ENCODE measurements at regions of chr12 and their contacts with region 1.

Region 1: GRCh38 chr12:62793256-62794217 is 141.4 kb downstream of the PPM1H start:
- DNase-seq: peak; percentile 80
- ATAC-seq: peak; percentile 70
- H3K4me3 ChIP-seq: no peak overlapping the region
- H3K4me3 Mint-ChIP-seq: no peak overlapping the region
- H3K27ac ChIP-seq: no peak overlapping the region
- H3K27ac Mint-ChIP-seq: no peak overlapping the region
- H3K4me1 ChIP-seq: no peaks in the 10 kb centered on the region
- H3K4me1 Mint-ChIP-seq: no peaks in the 10 kb centered on the region
- H3K27me3 ChIP-seq: no peaks in the 10 kb centered on the region
- H3K27me3 Mint-ChIP-seq: no peaks in the 10 kb centered on the region
- CTCF ChIP-seq: peak; percentile 97

Region 2: DNA sequence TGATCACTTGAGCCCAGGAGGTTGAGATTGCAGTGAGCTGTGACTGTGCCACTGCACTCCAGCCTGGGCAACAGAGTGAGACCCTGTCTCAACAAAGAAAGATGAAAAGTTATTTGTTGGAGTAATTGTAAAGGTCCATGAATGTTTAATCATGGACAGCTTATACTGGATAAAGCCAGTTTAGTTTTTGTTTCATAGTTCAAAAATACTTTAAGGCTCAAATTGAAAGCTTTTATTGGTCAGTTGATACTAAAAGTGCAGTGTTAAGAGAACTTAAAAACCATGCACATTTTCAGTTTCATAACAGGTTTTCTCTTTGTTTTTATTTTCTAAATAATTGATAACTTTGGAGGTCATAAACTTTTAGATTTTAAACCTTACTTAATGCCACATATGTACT is 218.5 kb before region 1 on chr12:
- CTCF ChIA-PET with region 1: interaction called, 349 read pairs
- POLR2A ChIA-PET with region 1: no interaction called
- intact Hi-C with region 1: no loop called
- DNase-seq: no peak
- ATAC-seq: no peak
- H3K4me3 ChIP-seq: no peak overlapping the region
- H3K4me3 Mint-ChIP-seq: no peak overlapping the region
- H3K27ac ChIP-seq: no peak overlapping the region
- H3K27ac Mint-ChIP-seq: no peak overlapping the region
- H3K4me1 ChIP-seq: no peaks in the 10 kb centered on the region
- H3K4me1 Mint-ChIP-seq: no peaks in the 10 kb centered on the region
- H3K27me3 ChIP-seq: no peaks in the 10 kb centered on the region
- H3K27me3 Mint-ChIP-seq: no peaks in the 10 kb centered on the region
- CTCF ChIP-seq: no peak

Region 3: DNA sequence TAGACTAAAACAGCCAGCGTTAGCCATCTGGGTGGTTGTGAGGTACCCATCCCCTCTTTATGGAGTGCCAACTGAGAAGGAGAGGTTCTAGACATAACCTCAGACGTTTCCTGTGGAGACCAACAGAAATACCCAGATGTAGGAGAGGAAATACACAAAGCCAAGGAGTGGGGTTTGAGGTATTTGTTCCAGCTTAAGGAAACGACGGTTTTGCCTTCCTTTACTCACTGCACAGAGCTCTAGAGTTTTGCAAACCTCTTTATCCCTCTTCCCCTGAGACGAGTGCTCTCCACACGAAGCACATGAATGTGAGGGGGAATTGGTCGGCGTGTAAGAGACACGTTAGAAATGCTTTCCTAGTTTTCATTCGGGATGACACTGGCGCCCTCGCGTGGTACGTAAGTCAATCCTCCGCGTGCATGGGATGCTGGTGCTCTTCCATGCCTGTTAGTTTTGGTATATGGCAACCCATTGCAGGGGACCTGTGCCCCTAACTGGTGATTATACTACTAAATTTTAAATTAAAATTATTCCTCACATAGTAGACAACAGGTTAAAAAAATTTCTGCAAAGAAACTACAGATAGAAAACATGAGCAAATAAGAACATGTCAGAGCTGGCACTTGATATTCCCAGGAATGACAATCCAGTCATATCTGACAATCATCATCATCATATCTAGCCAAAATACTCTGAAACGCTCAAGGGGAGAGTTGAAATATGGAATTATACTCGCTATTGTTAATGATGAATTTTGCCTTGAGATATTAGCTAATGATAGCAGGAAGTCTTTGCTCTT is 19.7 kb after region 1 on chr12:
- CTCF ChIA-PET with region 1: interaction called, 11 read pairs
- POLR2A ChIA-PET with region 1: no interaction called
- intact Hi-C with region 1: no loop called
- DNase-seq: peak; percentile 49
- ATAC-seq: no peak
- H3K4me3 ChIP-seq: peak overlapping the region in 3 of 5 experiments; percentile 3 to 30 (median 29)
- H3K4me3 Mint-ChIP-seq: peak overlapping the region; percentile 70
- H3K27ac ChIP-seq: no peak overlapping the region
- H3K27ac Mint-ChIP-seq: no peak overlapping the region
- H3K4me1 ChIP-seq: peaks cover 6 to 7% of the 10 kb centered on the region in 2 donors
- H3K4me1 Mint-ChIP-seq: peaks cover 7% of the 10 kb centered on the region
- H3K27me3 ChIP-seq: peaks cover 0 to 8% (median 0%) of the 10 kb centered on the region in 4 experiments
- H3K27me3 Mint-ChIP-seq: peaks cover 14% of the 10 kb centered on the region
- CTCF ChIP-seq: peak; percentile 65

Region 4: GRCh38 chr12:62848421-62848820 is 54.9 kb after region 1 on chr12:
- CTCF ChIA-PET with region 1: no interaction called
- POLR2A ChIA-PET with region 1: no interaction called
- intact Hi-C with region 1: no loop called
- DNase-seq: no peak
- ATAC-seq: no peak
- H3K4me3 ChIP-seq: no peak overlapping the region
- H3K4me3 Mint-ChIP-seq: no peak overlapping the region
- H3K27ac ChIP-seq: no peak overlapping the region
- H3K27ac Mint-ChIP-seq: no peak overlapping the region
- H3K4me1 ChIP-seq: no peaks in the 10 kb centered on the region
- H3K4me1 Mint-ChIP-seq: no peaks in the 10 kb centered on the region
- H3K27me3 ChIP-seq: peaks cover 0 to 4% (median 0%) of the 10 kb centered on the region in 4 experiments
- H3K27me3 Mint-ChIP-seq: peaks cover 7% of the 10 kb centered on the region
- CTCF ChIP-seq: no peak

Region 5: DNA sequence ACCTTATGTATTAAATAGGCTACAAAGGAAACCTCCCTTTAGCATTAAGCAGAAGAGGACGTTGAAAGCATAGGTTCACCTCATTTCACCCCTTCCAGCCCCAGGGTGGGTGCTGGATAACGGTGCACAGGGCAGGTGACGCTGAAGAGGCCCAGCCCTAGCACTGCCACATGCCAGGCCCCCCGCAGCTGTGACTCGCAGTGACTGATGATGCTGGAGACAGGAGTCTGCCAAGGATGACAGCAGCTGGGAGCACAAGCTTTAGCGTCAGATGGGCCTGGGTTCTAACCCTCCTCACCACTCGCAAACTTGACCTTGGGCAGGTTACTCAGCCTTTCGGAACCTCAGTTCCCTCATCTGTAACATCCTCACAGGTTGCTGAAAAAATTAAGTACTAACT is 1735.1 kb after region 1 on chr12:
- CTCF ChIA-PET with region 1: no interaction called
- POLR2A ChIA-PET with region 1: no interaction called
- intact Hi-C with region 1: no loop called
- DNase-seq: no peak
- ATAC-seq: no peak
- H3K4me3 ChIP-seq: no peak overlapping the region
- H3K4me3 Mint-ChIP-seq: no peak overlapping the region
- H3K27ac ChIP-seq: no peak overlapping the region
- H3K27ac Mint-ChIP-seq: no peak overlapping the region
- H3K4me1 ChIP-seq: no peaks in the 10 kb centered on the region
- H3K4me1 Mint-ChIP-seq: no peaks in the 10 kb centered on the region
- H3K27me3 ChIP-seq: no peaks in the 10 kb centered on the region
- H3K27me3 Mint-ChIP-seq: peaks cover 5% of the 10 kb centered on the region
- CTCF ChIP-seq: no peak

Region 6: DNA sequence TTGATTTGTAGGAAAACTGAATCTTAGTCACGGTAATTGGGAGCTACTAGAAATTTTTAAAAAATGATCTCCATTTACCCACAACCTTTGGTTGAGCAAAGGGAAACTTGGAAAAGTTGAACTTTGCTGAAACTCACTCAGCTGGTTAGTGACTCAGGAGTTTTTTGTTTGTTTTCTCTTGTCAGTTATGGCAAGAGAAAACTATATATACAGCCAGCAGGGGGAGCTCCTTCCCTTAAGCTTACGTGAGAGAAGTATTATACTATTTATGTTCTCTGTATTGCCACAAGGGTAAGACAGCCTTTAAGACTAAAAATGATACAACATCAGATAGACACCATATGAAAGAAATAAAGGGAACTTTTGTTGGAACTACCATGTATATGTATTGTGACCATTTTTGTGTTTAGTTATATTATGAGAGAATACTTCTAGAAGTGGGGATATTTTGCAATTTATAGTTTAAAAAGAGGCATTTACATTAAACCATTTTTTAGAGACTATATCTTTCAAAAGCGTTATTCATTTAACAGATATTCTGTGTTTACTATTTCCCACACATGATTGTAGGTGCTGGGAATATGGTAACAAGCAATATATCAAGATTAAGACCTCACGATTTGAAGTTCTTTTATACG is 2002.8 kb after region 1 on chr12:
- CTCF ChIA-PET with region 1: no interaction called
- POLR2A ChIA-PET with region 1: no interaction called
- intact Hi-C with region 1: no loop called
- DNase-seq: peak; percentile 81
- ATAC-seq: peak; percentile 82
- H3K4me3 ChIP-seq: no peak overlapping the region
- H3K4me3 Mint-ChIP-seq: no peak overlapping the region
- H3K27ac ChIP-seq: no peak overlapping the region
- H3K27ac Mint-ChIP-seq: no peak overlapping the region
- H3K4me1 ChIP-seq: no peaks in the 10 kb centered on the region
- H3K4me1 Mint-ChIP-seq: no peaks in the 10 kb centered on the region
- H3K27me3 ChIP-seq: no peaks in the 10 kb centered on the region
- H3K27me3 Mint-ChIP-seq: peaks cover 24% of the 10 kb centered on the region
- CTCF ChIP-seq: peak; percentile 95

Measured in B cell (primary cell).